HEK293T (cell line): ENCODE measurements at regions of chr1 and their contacts with region 1.

Region 1: GRCh38 chr1:157352817-157353408 is 199.4 kb downstream of the FCRL5 start:
- DNase-seq: no peak

Region 2: GRCh38 chr1:157233131-157233530 is 119.8 kb before region 1 on chr1:
- CTCF ChIA-PET with region 1: no interaction called
- POLR2A ChIA-PET with region 1: no interaction called
- DNase-seq: no peak

Region 3: GRCh38 chr1:157325220-157325619 is 27.7 kb before region 1 on chr1:
- CTCF ChIA-PET with region 1: no interaction called
- POLR2A ChIA-PET with region 1: no interaction called
- DNase-seq: no peak

Region 4: GRCh38 chr1:157363660-157364140 is 10.8 kb after region 1 on chr1:
- CTCF ChIA-PET with region 1: interaction called, 12 read pairs
- POLR2A ChIA-PET with region 1: no interaction called
- DNase-seq: peak; percentile 65